PC-9 (cell line): ENCODE measurements at regions of chr20 and their contacts with region 1.

Region 1: DNA sequence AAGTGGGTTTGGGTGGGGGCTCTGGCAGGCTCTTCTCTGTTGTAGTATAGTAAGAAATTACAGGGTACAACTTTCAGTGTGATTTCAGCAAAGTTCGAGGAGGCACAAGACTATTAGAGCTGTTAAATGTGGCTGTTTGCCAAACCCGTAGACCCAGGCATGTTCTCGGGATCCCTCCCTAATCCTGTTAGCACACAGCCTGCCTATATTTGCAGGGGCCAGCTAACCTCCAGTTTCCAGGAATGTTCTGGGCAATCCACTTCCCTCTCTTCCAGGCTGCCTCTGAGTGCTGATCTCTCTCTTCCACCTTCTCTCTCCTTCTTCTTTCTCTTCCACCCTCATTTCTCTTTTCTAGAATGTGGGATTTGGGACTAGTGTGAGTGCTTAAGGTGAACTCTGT is 34.8 kb upstream of the ZFP64 start:
- DNase-seq: no peak
- H3K4me3 ChIP-seq: no peak overlapping the region
- H3K27ac ChIP-seq: no peak overlapping the region
- H3K4me1 ChIP-seq: no peaks in the 10 kb centered on the region
- H3K27me3 ChIP-seq: peaks cover 75% of the 10 kb centered on the region
- CTCF ChIP-seq: no peak

Region 2: DNA sequence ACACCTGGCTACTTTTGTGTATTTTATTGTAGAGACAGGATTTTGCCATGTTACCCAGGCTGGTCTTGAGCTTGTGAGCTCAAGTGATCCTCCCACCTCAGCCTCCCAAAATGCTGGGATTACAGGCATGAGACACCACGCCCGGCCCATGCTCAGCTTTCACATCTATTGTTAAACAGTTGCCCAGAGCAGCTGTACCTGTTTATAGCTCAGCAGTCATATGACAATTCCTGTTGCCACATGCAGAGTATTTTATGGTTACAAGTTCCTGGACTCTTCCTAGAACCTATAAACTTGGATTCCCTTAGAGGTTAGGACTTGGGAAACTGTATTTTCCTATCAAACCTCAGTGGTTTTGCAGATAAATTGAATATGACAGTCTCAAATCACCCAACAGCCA is 1015.2 kb before region 1 on chr20:
- CTCF ChIA-PET with region 1: no interaction called
- POLR2A ChIA-PET with region 1: no interaction called
- intact Hi-C with region 1: no loop called
- DNase-seq: no peak
- H3K4me3 ChIP-seq: no peak overlapping the region
- H3K27ac ChIP-seq: no peak overlapping the region
- H3K4me1 ChIP-seq: no peaks in the 10 kb centered on the region
- H3K27me3 ChIP-seq: peaks cover 73% of the 10 kb centered on the region
- CTCF ChIP-seq: no peak

Region 3: DNA sequence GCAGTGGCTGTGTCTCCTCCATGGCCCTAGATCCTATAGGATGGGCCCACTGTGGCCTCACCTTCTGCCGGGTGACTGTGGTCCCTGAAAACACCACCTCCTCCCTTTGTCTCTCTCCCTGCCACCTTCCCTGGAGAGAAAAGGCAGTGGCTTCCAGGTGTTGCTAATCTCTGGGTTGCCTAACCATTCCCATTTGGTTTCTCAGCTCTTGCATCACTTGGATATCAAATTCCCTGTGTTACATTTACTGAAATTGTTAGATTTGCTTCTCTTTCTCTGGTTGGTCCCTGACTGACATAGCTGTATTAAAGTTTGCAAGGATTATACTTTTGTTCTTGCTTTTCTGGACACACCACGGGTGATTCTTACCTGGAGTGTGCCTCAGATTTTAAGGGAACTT is 25.5 kb before region 1 on chr20:
- CTCF ChIA-PET with region 1: interaction called, 6 read pairs
- POLR2A ChIA-PET with region 1: no interaction called
- intact Hi-C with region 1: loop called (anchors 2 kb)
- DNase-seq: no peak
- H3K4me3 ChIP-seq: no peak overlapping the region
- H3K27ac ChIP-seq: 0 out of 2 replicates have a peak overlapping the region, but pooled peaks have one; percentile 20
- H3K4me1 ChIP-seq: no peaks in the 10 kb centered on the region; the same call in 1 of the 2 replicates
- H3K27me3 ChIP-seq: no peaks in the 10 kb centered on the region
- CTCF ChIP-seq: no peak